ENCODE measurements at regions of chr3 and their contacts with region 1.

Region 1: DNA sequence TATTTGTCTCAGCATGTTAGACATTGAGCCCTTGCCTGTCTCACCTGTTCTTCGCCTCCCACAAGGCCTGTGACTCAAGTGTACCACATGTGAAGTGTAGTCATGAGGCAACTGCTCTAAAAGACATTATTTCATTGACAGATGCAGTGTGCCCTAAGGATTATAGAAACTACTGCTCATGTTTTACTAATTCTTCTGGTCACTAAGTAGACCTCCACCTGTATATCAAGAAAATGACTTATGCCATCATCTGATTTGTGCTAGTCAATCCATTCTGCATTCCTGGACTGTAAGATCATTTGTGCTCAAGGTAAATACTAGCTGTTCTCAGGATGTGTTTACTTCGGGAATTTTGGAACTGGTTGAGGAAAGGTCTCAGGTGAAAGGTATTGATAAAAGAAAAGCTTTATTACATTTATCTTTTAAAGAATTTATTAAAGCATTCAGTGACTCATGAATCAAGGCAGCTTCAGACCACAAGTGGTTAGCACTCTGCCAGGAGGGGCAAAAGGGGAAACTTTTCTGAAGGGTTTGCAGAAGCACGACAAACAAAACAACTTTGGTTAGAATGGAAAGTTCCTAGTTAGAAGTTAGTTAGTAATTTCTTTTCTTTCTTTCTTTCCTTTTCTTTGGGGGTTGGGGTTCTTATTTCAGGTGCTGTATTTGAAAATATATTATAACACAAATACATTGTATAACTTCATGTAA is 465.3 kb upstream of the CBLB start:
- DNase-seq: peak; percentile 81
- H3K4me3 Mint-ChIP-seq: peak overlapping the region; percentile 49
- H3K27ac Mint-ChIP-seq: peak overlapping the region; percentile 87
- H3K4me1 Mint-ChIP-seq: peaks cover 80% of the 10 kb centered on the region
- H3K27me3 Mint-ChIP-seq: no peaks in the 10 kb centered on the region

Region 2: DNA sequence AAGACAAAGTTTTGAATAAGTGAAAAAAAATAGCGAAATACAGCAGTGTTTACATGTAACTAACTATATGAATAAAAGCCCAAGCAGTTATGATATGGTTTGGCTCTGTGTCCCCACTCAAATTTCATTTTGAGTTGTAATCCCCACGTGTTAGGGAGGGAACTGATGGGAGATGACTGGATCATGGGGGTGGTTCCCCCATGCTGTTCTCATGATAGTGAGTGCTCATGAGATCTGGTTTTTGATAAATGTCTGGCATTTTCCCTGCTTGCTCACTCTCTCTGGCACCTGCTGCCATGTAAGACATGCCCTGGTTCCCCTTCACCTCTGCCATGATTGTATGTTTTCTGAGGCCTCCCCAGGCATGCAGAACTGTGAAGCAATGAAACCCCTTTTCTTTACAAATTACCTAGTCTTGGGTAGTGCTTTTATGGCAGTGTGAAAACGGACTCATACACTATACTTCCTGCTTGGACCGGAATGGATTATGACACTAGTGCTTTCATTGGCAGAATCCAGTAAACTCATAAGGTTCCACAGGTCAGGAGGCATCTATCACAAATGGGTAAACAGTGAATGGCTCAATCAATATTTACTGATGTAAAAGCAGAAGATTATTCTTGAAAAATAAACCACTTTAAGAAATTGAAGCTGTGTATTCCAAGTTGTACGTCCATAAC is 657.3 kb before region 1 on chr3:
- CTCF ChIA-PET with region 1: no interaction called
- POLR2A ChIA-PET with region 1: no interaction called
- intact Hi-C with region 1: loop called (anchors 1 kb)
- DNase-seq: peak; percentile 77
- H3K4me3 Mint-ChIP-seq: no peak overlapping the region
- H3K27ac Mint-ChIP-seq: peak overlapping the region; percentile 86
- H3K4me1 Mint-ChIP-seq: peaks cover 9% of the 10 kb centered on the region
- H3K27me3 Mint-ChIP-seq: no peaks in the 10 kb centered on the region

Region 3: GRCh38 chr3:106013971-106014370 is 320.1 kb before region 1 on chr3:
- CTCF ChIA-PET with region 1: interaction called, 3 read pairs
- POLR2A ChIA-PET with region 1: no interaction called
- intact Hi-C with region 1: loop called (anchors 1 kb)
- DNase-seq: no peak
- H3K4me3 Mint-ChIP-seq: no peak overlapping the region
- H3K27ac Mint-ChIP-seq: peak overlapping the region; percentile 30
- H3K4me1 Mint-ChIP-seq: peaks cover 41% of the 10 kb centered on the region
- H3K27me3 Mint-ChIP-seq: no peaks in the 10 kb centered on the region

Region 4: GRCh38 chr3:106215047-106215446 is 119.0 kb before region 1 on chr3:
- CTCF ChIA-PET with region 1: interaction called, 6 read pairs
- POLR2A ChIA-PET with region 1: interaction called, 5 read pairs
- intact Hi-C with region 1: loop called (anchors 1 kb)
- DNase-seq: peak; percentile 64
- H3K4me3 Mint-ChIP-seq: no peak overlapping the region
- H3K27ac Mint-ChIP-seq: peak overlapping the region; percentile 68
- H3K4me1 Mint-ChIP-seq: peaks cover 61% of the 10 kb centered on the region
- H3K27me3 Mint-ChIP-seq: no peaks in the 10 kb centered on the region

Region 5: GRCh38 chr3:106423321-106424225 is 89.5 kb after region 1 on chr3:
- CTCF ChIA-PET with region 1: interaction called, 3 read pairs
- POLR2A ChIA-PET with region 1: interaction called, 25 read pairs
- intact Hi-C with region 1: loop called (anchors 1 kb)
- DNase-seq: peak; percentile 59
- H3K4me3 Mint-ChIP-seq: peak overlapping the region; percentile 18
- H3K27ac Mint-ChIP-seq: peak overlapping the region; percentile 94
- H3K4me1 Mint-ChIP-seq: peaks cover 54% of the 10 kb centered on the region
- H3K27me3 Mint-ChIP-seq: no peaks in the 10 kb centered on the region

Region 6: GRCh38 chr3:106482451-106482850 is 148.4 kb after region 1 on chr3:
- CTCF ChIA-PET with region 1: no interaction called
- POLR2A ChIA-PET with region 1: no interaction called
- intact Hi-C with region 1: no loop called
- DNase-seq: no peak
- H3K4me3 Mint-ChIP-seq: no peak overlapping the region
- H3K27ac Mint-ChIP-seq: no peak overlapping the region
- H3K4me1 Mint-ChIP-seq: no peaks in the 10 kb centered on the region
- H3K27me3 Mint-ChIP-seq: no peaks in the 10 kb centered on the region

Region 7: DNA sequence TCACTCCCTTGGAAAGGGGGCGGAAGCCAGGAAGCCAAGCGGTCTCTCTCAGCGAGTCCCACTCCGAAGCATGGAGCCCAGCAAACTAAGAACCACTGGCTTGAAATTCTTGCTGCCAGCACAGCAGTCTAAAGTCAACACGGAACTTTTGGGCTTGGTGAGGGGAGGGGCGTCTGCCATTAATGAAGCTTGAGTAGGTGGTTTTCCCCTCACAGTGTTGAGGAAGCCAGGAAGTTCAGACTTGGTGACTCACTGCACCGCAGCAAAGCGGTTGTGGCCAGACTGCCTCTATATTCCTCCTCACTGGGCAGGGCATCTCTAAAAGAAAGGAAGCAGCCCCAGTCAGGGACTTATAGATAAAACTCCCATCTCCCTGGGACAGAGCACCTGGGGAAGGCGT is 200.1 kb after region 1 on chr3:
- CTCF ChIA-PET with region 1: no interaction called
- POLR2A ChIA-PET with region 1: no interaction called
- intact Hi-C with region 1: loop called (anchors 2 kb)
- DNase-seq: peak; percentile 81
- H3K4me3 Mint-ChIP-seq: peak overlapping the region; percentile 7
- H3K27ac Mint-ChIP-seq: peak overlapping the region; percentile 80
- H3K4me1 Mint-ChIP-seq: peaks cover 27% of the 10 kb centered on the region
- H3K27me3 Mint-ChIP-seq: no peaks in the 10 kb centered on the region